Posterior cingulate gyrus (tissue), 11 donors: ENCODE measurements at regions of chr18 and their contacts with region 1.

Region 1: GRCh38 chr18:48951448-48952286 is 902 bp upstream of the SMAD7 start:
- DNase-seq: peak; percentile 63 to 97 (median 81)

Region 2: GRCh38 chr18:48053881-48054816 is 897.5 kb before region 1 on chr18:
- intact Hi-C with region 1: no loop called
- DNase-seq: peak in 2 of 10 donors; percentile 46 to 63

Region 3: DNA sequence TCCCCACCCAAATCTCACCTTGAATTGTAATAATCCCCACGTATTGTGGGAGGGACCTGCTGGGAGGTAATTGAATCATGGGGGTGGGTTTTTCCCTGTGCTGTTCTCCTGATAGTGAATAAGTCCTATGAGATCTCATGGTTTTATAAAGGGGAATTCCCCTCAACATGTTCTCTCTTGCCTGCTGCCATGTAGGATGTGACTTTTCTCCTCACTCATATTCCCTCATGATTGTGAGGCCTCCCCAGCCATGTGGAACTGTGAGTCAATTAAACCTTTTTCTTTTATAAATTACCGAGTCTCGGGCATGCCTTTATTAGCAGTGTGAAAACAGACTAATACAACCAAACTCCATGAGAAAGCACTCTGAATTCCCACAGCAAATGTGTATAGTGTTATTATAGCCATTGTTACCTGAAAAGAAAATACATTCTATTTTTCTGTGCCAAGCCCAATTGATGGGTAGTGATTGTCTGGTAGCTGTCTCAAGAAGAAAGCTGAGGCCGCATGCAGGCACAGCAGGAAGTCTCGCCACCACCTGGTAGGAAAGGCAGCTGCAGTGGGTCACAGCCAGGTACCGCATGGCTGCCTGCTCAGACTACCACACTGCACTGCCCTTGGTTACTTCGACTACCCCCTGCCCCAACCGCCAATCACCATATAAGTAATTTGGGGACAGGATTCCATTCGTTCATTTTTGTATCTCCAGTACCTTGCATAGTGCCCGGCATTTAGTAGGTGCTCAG is 532.2 kb before region 1 on chr18:
- intact Hi-C with region 1: no loop called
- DNase-seq: no peak

Region 4: GRCh38 chr18:48859311-48860268 is 92.1 kb before region 1 on chr18:
- intact Hi-C with region 1: loop called (anchors 2 kb)
- DNase-seq: peak; percentile 80 to 98 (median 87)

Region 5: DNA sequence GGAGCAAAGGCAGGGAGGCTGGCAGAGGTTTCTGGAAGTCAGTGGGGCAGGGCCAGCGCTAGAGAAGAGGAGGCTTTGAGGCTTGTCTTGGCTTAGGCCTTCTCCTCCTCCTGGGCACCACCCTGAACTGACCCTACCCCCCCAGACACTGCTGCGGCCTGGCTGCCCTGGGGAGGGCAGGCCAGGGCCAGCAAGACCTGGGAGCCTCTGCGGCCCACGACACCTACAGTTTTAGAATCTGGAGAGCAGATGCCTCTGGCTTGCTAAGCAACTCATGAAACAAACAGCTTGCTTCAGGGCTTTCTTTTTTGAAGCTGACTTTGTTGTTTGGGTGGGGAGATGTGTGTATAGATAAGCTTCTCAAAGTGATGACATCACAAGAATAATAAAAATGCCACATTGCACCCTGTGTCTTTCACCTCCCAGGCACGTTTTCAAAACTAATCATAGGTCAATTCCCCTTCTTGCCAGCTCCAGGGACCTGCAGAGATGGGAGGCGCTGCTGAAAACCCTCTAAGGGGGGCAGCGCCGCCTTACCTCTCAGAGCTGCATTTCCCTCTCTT is 45.3 kb after region 1 on chr18:
- intact Hi-C with region 1: no loop called
- DNase-seq: peak in 1 of 10 donors; percentile 27

Region 6: DNA sequence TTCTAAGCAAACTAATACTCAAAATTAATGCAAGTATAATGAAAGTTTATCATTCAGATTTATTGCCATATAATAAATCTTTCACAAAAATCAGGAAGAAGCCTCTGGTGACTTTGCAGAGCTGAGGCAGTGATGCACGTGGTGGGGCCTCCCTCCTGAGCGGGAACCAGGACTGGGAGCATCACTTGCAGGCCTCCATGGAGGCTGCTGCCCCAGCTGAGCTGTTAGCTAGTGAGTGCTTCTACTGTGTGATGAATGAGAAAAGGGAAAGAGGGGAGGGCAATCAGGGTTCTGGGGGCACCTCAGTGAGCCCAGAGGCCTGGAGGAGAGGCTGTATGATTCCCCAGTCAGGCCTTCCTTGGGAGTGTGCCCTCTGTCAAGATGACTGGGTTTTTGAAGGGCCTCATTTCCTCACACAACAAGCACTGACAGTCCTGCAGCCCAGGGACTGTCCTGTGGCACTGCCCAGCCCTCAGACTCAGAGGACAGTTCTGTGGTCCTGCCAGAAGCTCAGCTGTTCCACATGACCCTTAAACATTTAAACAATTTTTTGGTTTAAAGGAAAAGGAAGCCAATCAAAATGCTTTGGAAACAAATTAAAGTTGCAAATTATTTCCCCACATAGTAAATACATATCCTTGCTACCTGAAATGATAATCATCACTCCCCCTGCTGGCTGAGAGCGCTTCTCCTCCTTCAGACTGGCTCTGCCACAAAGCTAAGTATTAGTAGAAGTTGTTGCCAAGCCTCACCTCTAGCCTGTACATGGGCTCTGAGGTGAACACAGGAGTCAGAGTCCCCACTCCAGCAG is 90.0 kb after region 1 on chr18:
- intact Hi-C with region 1: no loop called
- DNase-seq: no peak

Region 7: GRCh38 chr18:49178736-49179135 is 227.1 kb after region 1 on chr18:
- intact Hi-C with region 1: loop called (anchors 10 kb)
- DNase-seq: peak in 3 of 10 donors; percentile 29 to 37 (median 37)